ENCODE measurements at regions of chr17 and their contacts with region 1.

Region 1: DNA sequence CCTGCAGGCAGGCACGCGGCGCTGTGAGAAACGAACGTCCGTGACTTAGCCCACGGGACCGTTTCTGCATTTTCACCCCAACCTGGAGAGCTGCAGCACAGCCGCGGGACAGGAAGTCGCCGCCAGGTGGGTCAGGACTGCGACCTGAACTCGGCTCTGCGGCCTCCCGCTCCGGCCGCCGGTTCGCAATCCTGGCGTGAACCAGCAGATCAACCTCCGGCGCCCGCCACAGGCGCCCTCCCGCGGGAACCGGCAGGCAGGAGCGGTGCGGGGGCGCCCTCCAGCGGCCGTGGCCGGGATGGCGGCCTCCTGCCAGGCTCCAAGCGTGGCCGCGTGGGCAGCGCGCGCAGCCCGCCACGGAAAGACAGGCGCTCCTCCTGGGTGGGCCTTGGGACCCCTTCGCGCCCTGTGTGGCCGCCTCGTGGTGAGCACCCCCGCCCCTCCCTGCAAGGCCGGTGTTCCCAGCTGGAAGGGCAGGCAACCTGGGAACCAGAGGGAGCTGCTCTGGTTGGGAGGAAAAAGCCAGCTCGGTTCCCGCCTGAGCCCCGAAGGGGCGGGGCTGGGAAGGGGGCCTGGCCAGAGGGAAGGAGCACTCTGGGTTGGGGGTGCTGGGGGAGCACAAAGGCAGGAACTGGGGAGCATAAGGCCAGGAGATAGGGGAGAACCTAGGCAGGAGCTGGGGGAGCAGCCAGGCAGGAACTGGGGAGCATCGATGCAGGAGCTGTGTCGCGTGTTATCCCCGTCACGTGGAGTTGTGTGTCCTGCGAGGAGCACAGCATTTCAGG is 28.2 kb downstream of the ACTG1 start:
- DNase-seq: peak; percentile 63 to 92 (median 72)
- ATAC-seq: peak; percentile 74
- H3K4me3 ChIP-seq: peak overlapping the region; percentile 42
- H3K27ac ChIP-seq: peak overlapping the region; percentile 85
- H3K4me1 ChIP-seq: peaks cover 36 to 85% of the 10 kb centered on the region in 2 experiments
- H3K27me3 ChIP-seq: no peaks in the 10 kb centered on the region; a peak in 1 of 5 replicates
- CTCF ChIP-seq: peak; percentile 88 to 97 (median 96)
- EP300 ChIP-seq: no peak; the same call in 1 of the 2 replicates
- POLR2A ChIP-seq: peak; percentile 68
- RAD21 ChIP-seq: peak; percentile 94 to 96

Region 2: DNA sequence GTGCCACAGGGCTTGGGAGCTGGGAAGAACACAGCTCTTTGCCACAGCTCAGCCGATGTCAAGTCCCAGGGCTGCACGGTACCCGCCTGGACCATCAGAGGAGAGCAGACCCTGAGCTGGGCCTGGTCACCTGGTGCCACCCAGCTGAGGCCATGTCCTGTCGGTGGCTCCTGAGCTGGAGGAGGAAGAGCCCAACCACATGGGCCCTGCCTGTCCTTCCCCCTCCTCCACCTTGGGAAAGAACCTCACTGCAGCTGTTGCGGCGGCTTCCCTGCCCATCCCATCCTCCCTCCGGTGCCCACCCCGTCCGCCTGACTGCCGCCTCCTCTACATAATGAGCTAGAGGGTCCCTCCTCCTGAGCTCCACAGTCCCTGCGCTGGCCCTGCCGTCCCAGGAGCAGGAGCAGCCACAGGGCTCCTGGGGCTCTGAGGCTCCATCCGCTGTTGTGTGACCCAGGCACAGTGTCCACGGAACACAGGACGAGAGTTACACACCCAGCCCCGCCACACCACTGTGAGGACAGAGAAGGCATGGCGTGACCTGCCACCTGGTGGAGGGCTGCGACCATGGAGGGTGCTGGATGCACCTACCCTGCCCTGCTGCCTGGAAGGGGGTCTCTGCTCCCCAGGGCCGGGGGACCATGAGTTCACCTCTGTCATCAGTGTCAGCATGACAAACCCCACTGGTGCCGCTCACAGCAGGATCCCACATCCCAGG is 514.2 kb before region 1 on chr17:
- CTCF ChIA-PET with region 1: no interaction called
- POLR2A ChIA-PET with region 1: no interaction called
- in situ Hi-C with region 1: no loop called
- intact Hi-C with region 1: no loop called
- DNase-seq: peak in 3 of 4 experiments; percentile 34 to 52 (median 40)
- ATAC-seq: peak; percentile 77
- H3K4me3 ChIP-seq: no peak overlapping the region
- H3K27ac ChIP-seq: no peak overlapping the region
- H3K4me1 ChIP-seq: peaks cover 0 to 49% of the 10 kb centered on the region in 2 experiments; a peak in 4 of 5 replicates
- H3K27me3 ChIP-seq: peaks cover 15 to 20% of the 10 kb centered on the region in 2 experiments
- CTCF ChIP-seq: peak; percentile 48 to 60 (median 48)
- EP300 ChIP-seq: no peak
- POLR2A ChIP-seq: no peak
- RAD21 ChIP-seq: peak in 1 of 2 experiments; percentile 57; a peak in 2 of 4 replicates

Region 3: DNA sequence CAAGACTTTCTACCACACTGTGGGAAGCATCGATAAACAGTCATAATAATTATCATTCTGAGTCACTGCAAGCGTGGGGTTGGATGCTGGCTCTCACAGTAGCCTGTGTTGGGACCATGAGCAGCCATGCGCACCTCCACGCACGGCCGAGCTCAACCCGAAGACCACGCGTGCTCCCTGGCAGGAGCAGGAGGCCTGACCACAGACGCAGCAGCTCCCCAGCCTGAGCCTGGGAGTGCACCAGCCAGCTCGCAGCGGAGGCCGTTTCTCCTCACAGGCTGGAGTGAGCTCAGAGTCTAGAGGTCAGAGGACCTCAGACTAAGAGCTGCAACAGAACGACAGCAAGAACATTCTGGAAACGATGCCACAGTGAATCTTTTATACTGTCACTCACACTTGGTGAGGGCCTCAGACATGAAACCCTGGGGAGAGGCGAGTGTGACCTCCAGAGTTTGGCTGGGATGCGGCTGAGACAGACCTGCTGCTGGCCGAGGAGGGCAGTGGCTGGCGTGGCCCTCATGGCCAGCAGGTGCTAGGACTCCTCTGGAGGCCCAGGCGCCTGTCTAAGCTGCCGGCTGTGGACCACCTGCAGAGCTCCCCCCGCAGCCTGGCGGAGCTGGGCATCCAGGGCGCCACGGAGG is 239.2 kb before region 1 on chr17:
- CTCF ChIA-PET with region 1: no interaction called
- POLR2A ChIA-PET with region 1: no interaction called
- in situ Hi-C with region 1: loop called (anchors 5 kb)
- intact Hi-C with region 1: no loop called
- DNase-seq: no peak
- ATAC-seq: no peak; the same call in 2 of the 3 replicates
- H3K4me3 ChIP-seq: no peak overlapping the region
- H3K27ac ChIP-seq: no peak overlapping the region
- H3K4me1 ChIP-seq: peaks cover 5 to 74% of the 10 kb centered on the region in 2 experiments; a peak in 4 of 5 replicates
- H3K27me3 ChIP-seq: no peaks in the 10 kb centered on the region
- CTCF ChIP-seq: no peak
- EP300 ChIP-seq: no peak
- POLR2A ChIP-seq: 0 out of 2 replicates have a peak, but pooled peaks have one; percentile 20
- RAD21 ChIP-seq: no peak

Region 4: DNA sequence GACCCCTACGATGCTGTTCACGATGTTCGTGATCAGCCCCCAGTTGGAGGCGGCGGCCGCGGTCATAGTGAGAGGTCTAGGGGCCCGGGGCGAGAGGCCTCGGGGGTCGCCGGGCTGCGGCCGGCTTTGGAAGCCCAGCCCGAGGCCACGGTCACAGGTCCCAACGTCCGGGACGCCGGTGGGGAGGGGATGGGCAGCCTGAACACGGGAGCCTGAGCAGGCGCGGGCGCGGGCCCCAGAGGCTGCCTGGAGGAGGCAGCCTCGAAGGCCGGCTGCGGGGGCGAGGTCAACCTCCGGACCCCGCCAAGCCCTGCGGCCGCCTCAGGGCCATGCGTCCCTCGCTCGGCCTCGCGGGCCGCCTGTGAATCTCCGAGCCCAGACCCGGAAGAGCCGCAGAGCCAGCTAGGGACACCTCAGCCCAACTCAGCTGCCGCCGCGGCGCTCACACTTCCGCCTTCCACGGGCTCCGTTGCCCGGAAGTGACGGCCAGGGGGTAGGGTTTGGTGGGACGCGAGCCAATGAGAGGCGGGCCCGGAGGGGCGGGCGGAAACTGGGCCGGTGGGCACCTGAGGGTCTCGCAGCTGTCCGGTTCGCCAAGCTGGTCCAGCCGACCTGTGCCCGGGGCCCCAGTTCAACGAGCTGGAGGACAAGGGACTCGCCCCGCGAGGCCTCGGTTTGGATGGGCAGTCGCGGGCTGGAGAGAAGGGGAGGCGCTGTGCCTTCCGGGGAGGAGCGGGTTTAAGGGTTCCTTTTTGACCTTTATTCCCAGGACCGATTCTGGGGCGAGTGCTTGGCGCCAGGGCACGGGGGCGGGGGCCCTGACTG is 189.3 kb before region 1 on chr17 and contains the start of gene SLC38A10:
- CTCF ChIA-PET with region 1: interaction called, 5 read pairs
- POLR2A ChIA-PET with region 1: interaction called, 5 read pairs
- in situ Hi-C with region 1: no loop called
- intact Hi-C with region 1: loop called (anchors 10 kb)
- DNase-seq: peak; percentile 95 to 98 (median 96)
- ATAC-seq: peak; percentile 93
- H3K4me3 ChIP-seq: peak within 1 kb of the TSS; percentile 86
- H3K27ac ChIP-seq: peak within 1 kb of the TSS; percentile 90
- H3K4me1 ChIP-seq: peaks cover 18 to 40% of the 10 kb centered on the region in 2 experiments; a peak in 4 of 5 replicates
- H3K27me3 ChIP-seq: no peaks in the 10 kb centered on the region
- CTCF ChIP-seq: 0 out of 6 replicates have a peak, but pooled peaks of 1 of the 3 experiments have one; percentile 6
- EP300 ChIP-seq: 0 out of 2 replicates have a peak, but pooled peaks have one; percentile 14
- POLR2A ChIP-seq: peak; percentile 94
- RAD21 ChIP-seq: no peak
- polyA plus RNA-seq, gene SLC38A10: 0.45 to 0.92 TPM

Region 5: GRCh38 chr17:81405411-81405872 is 78.9 kb before region 1 on chr17:
- CTCF ChIA-PET with region 1: no interaction called
- POLR2A ChIA-PET with region 1: interaction called, 8 read pairs
- in situ Hi-C with region 1: no loop called
- intact Hi-C with region 1: loop called (anchors 5 kb)
- DNase-seq: no peak
- ATAC-seq: no peak
- H3K4me3 ChIP-seq: no peak overlapping the region
- H3K27ac ChIP-seq: no peak overlapping the region
- H3K4me1 ChIP-seq: peaks cover 28 to 81% of the 10 kb centered on the region in 2 experiments
- H3K27me3 ChIP-seq: no peaks in the 10 kb centered on the region
- CTCF ChIP-seq: no peak
- EP300 ChIP-seq: no peak
- POLR2A ChIP-seq: no peak
- RAD21 ChIP-seq: no peak

Region 6: GRCh38 chr17:81512560-81513371 is 28.4 kb after region 1 on chr17 and contains the start of gene ACTG1:
- CTCF ChIA-PET with region 1: interaction called, 3 read pairs
- POLR2A ChIA-PET with region 1: interaction called, 18 read pairs
- in situ Hi-C with region 1: no loop called
- intact Hi-C with region 1: no loop called
- DNase-seq: peak; percentile 93 to 97 (median 96)
- ATAC-seq: peak; percentile 75
- H3K4me3 ChIP-seq: peak within 1 kb of the TSS; percentile 86
- H3K27ac ChIP-seq: peak within 1 kb of the TSS; percentile 96
- H3K4me1 ChIP-seq: peaks cover 35 to 66% of the 10 kb centered on the region in 2 experiments; a peak in 4 of 5 replicates
- H3K27me3 ChIP-seq: no peaks in the 10 kb centered on the region
- CTCF ChIP-seq: no peak
- EP300 ChIP-seq: peak; percentile 31
- POLR2A ChIP-seq: peak; percentile 98
- RAD21 ChIP-seq: no peak
- polyA plus RNA-seq, gene ACTG1: 259 to 386 TPM